ENCODE measurements at regions of chr6 and their contacts with region 1.

Region 1: DNA sequence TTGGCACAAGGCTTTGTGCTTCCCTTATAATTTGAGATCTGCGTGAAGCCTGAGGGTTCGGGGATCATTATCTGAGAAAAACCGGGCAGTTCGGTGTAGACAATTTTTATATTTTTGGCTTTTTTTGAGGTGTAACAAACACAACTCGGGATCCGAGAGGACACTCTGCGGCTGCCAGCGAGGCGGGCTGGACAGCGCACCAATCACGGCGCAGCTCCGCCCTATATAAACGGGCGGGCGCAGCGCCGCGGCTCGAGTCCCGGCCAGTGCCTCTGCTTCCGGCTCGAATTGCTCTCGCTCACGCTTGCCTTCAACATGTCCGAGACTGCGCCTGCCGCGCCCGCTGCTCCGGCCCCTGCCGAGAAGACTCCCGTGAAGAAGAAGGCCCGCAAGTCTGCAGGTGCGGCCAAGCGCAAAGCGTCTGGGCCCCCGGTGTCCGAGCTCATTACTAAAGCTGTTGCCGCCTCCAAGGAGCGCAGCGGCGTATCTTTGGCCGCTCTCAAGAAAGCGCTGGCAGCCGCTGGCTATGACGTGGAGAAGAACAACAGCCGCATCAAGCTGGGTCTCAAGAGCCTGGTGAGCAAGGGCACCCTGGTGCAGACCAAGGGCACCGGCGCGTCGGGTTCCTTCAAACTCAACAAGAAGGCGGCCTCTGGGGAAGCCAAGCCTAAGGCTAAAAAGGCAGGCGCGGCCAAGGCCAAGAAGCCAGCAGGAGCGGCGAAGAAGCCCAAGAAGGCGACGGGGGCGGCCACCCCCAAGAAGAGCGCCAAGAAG is 69.0 kb downstream of the HFE start:
- DNase-seq: peak; percentile 91
- H3K4me3 Mint-ChIP-seq: peak overlapping the region; percentile 90
- H3K27ac Mint-ChIP-seq: peak overlapping the region; percentile 96
- H3K4me1 Mint-ChIP-seq: peaks cover 44% of the 10 kb centered on the region
- H3K27me3 Mint-ChIP-seq: no peaks in the 10 kb centered on the region

Region 2: DNA sequence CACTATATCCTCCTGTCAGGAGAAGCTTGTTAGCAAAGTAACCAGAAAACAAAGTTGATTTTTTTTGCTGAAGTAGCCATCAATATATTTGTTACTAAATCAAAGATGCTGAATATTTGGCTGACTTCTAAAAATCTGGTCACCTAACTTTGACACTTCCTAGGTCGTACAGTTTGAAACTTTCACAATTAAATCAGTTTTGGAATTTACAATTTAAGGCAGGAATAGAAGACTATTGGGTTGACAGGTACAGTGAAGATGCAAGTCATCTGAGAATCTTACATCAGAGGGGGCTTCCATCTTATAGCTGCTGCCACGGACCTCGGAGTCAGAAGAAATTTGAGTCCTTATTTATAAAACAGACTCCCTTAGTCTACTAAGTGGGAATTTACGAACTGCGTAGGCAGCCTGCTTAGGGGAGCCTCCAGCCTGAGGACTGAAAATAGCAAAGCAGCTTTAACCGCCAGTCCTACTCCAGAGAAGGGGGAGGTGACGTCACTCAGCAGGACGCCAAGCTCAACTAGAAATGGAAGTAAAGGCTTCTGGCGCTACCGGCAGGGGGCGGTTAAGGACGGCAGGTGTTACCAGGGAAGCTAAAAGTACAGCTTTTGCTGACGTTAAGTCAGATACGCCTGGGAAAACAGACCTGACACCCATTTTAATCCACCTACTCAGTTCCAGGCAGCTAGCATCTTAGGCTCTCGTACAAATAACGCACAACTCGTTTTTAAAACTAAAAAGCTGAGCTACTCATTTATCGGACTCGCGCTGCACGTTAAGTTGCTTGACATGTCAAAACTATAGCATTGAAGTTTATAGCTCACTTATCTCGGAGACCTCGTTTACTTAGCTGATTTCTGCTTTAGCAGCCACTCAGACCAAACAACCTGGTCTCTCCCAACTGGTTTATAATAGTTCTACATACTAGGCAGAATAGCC is 130.1 kb before region 1 on chr6:
- intact Hi-C with region 1: loop called (anchors 2 kb)
- DNase-seq: peak; percentile 89
- H3K4me3 Mint-ChIP-seq: peak overlapping the region; percentile 75
- H3K27ac Mint-ChIP-seq: peak overlapping the region; percentile 90
- H3K4me1 Mint-ChIP-seq: peaks cover 77% of the 10 kb centered on the region
- H3K27me3 Mint-ChIP-seq: no peaks in the 10 kb centered on the region

Region 3: GRCh38 chr6:26065952-26066380 is 90.3 kb before region 1 on chr6:
- intact Hi-C with region 1: no loop called
- DNase-seq: peak; percentile 49
- H3K4me3 Mint-ChIP-seq: no peak overlapping the region
- H3K27ac Mint-ChIP-seq: no peak overlapping the region
- H3K4me1 Mint-ChIP-seq: peaks cover 7% of the 10 kb centered on the region
- H3K27me3 Mint-ChIP-seq: peaks cover 31% of the 10 kb centered on the region

Region 4: DNA sequence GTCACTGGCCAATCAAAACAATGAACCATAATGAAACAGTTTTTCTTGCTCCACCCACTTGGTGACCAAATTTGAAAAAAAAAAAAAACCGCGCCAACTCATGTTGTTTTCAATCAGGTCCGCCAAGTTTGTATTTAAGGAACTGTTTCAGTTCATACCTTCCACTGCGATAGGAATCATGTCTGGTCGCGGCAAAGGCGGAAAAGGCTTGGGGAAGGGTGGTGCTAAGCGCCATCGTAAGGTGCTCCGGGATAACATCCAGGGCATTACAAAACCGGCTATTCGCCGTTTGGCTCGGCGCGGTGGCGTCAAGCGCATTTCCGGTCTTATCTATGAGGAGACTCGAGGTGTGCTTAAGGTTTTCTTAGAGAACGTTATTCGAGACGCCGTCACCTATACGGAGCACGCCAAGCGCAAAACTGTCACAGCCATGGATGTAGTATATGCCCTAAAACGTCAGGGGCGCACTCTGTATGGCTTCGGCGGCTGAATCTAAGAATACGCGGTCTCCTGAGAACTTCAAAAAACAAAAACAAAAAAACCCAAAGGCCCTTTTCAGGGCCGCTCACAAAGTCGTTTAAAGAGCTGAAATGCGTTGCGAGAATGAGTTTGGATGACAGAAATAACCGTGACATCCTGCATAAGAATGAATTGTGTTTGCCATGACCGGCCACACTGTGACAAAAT is 52.4 kb before region 1 on chr6:
- intact Hi-C with region 1: loop called (anchors 1 kb)
- DNase-seq: peak; percentile 89
- H3K4me3 Mint-ChIP-seq: peak overlapping the region; percentile 76
- H3K27ac Mint-ChIP-seq: peak overlapping the region; percentile 95
- H3K4me1 Mint-ChIP-seq: peaks cover 19% of the 10 kb centered on the region
- H3K27me3 Mint-ChIP-seq: peaks cover 3% of the 10 kb centered on the region

Region 5: GRCh38 chr6:26175428-26176181 is 19.3 kb after region 1 on chr6:
- intact Hi-C with region 1: loop called (anchors 1 kb)
- DNase-seq: peak; percentile 52
- H3K4me3 Mint-ChIP-seq: peak overlapping the region; percentile 56
- H3K27ac Mint-ChIP-seq: peak overlapping the region; percentile 63
- H3K4me1 Mint-ChIP-seq: peaks cover 45% of the 10 kb centered on the region
- H3K27me3 Mint-ChIP-seq: no peaks in the 10 kb centered on the region

Region 6: GRCh38 chr6:26196846-26197648 is 40.8 kb after region 1 on chr6:
- intact Hi-C with region 1: loop called (anchors 2 kb)
- DNase-seq: peak; percentile 84
- H3K4me3 Mint-ChIP-seq: peak overlapping the region; percentile 97
- H3K27ac Mint-ChIP-seq: peak overlapping the region; percentile 97
- H3K4me1 Mint-ChIP-seq: peaks cover 43% of the 10 kb centered on the region
- H3K27me3 Mint-ChIP-seq: no peaks in the 10 kb centered on the region

Region 7: DNA sequence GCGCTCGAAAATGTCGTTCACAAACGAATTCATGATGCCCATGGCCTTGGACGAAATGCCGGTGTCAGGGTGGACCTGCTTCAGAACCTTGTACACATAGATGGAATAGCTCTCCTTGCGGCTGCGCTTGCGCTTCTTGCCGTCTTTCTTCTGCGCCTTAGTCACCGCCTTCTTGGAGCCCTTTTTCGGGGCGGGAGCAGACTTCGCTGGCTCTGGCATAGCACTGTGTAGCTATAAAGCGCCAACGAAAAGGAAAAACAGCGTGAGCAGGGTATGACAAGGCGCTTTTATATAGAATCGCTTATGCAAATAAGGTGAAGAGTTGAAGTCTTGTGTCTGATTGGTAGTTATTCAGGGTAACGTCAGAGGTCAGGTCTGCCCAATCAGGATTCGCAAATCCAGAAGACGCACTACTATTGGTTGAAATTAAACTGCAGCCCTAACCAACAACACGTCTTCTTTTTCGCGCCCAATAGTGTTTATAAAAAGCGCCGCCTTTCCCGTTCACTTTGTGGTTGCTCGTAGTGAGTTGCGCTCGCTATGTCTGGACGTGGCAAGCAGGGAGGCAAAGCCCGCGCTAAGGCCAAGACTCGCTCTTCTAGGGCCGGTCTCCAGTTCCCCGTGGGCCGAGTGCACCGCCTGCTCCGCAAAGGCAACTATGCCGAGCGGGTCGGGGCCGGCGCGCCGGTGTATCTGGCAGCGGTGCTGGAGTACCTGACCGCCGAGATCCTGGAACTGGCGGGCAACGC is 976.4 kb after region 1 on chr6:
- intact Hi-C with region 1: loop called (anchors 1 kb)
- DNase-seq: peak; percentile 95
- H3K4me3 Mint-ChIP-seq: no peak overlapping the region
- H3K27ac Mint-ChIP-seq: no peak overlapping the region
- H3K4me1 Mint-ChIP-seq: peaks cover 38% of the 10 kb centered on the region
- H3K27me3 Mint-ChIP-seq: no peaks in the 10 kb centered on the region

Region 8: DNA sequence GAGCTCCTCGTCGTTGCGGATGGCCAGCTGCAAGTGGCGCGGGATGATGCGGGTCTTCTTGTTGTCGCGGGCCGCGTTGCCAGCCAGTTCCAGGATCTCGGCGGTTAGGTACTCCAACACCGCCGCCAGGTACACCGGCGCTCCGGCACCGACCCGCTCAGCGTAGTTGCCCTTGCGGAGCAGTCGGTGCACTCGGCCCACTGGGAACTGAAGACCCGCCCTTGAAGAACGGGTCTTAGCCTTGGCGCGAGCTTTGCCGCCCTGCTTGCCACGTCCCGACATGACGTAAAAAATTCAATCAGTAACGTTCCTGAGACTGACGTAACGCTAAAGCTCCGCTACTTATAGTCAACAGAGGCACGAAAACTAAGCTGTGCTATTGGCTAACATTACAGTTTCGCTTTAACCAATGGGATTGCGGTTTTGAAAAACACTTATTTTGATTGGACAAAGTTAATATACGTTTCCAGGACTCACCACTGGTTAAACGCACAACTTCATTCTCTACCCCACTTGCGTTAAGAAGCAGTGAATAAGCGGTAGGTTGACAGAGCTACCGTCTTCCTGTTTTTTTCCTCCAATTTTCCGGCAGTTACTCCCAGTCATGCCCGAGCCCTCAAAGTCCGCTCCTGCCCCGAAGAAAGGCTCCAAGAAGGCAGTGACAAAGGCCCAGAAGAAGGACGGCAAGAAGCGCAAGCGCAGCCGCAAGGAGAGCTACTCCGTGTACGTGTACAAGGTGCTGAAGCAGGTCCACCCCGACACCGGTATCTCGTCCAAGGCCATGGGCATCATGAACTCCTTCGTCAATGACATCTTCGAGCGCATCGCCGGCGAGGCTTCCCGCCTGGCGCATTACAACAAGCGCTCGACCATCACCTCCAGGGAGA is 1682.0 kb after region 1 on chr6:
- intact Hi-C with region 1: loop called (anchors 1 kb)
- DNase-seq: peak; percentile 85
- H3K4me3 Mint-ChIP-seq: no peak overlapping the region
- H3K27ac Mint-ChIP-seq: no peak overlapping the region
- H3K4me1 Mint-ChIP-seq: peaks cover 28% of the 10 kb centered on the region
- H3K27me3 Mint-ChIP-seq: no peaks in the 10 kb centered on the region

Measured in activated T-helper 2 cell treated with anti-CD3 and anti-CD28 coated beads, Interferon-gamma antibody, Interleukin-2, Interleukin-4, amounts not matched to agents 10 μg/mL and 5 μg/mL and 100 μg/mL, durations not matched to agents 14 hours and 24 hours and 36 hours (primary cell).